ENCODE measurements at regions of chr2 and their contacts with region 1.

Region 1: GRCh38 chr2:46364797-46365457 is 67.7 kb downstream of the EPAS1 start:
- DNase-seq: no peak

Region 2: GRCh38 chr2:46010925-46011490 is 353.9 kb before region 1 on chr2:
- intact Hi-C with region 1: loop called (anchors 5 kb)
- DNase-seq: no peak

Region 3: GRCh38 chr2:46062637-46063412 is 302.1 kb before region 1 on chr2:
- intact Hi-C with region 1: loop called (anchors 1 kb)
- DNase-seq: peak in 9 of 10 donors; percentile 28 to 90 (median 72)

Region 4: DNA sequence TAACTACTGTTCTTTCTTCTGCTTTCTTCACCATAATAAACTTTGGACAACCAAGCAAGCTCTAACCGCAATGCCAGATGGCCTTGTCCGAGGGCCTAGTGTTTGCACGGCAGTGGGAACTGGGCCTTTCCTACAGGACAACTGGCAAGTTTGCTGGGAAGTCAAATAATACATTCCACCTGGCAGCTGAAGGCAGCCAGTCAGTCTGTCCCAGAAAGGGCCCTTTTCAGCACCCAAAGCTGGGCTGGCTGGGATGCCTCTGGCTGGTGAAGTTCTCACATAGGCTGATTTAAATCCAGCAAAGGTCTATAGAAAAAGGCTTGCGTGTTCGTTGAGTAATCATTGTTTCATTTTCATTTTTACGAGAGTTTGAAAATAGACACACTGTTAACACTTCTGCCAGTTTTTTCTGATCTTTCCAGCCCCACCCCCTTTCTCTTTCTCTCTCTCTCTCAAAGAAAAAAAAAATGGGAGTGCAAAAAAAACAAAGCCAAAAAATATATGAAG is 177.8 kb before region 1 on chr2:
- intact Hi-C with region 1: loop called (anchors 10 kb)
- DNase-seq: no peak

Region 5: DNA sequence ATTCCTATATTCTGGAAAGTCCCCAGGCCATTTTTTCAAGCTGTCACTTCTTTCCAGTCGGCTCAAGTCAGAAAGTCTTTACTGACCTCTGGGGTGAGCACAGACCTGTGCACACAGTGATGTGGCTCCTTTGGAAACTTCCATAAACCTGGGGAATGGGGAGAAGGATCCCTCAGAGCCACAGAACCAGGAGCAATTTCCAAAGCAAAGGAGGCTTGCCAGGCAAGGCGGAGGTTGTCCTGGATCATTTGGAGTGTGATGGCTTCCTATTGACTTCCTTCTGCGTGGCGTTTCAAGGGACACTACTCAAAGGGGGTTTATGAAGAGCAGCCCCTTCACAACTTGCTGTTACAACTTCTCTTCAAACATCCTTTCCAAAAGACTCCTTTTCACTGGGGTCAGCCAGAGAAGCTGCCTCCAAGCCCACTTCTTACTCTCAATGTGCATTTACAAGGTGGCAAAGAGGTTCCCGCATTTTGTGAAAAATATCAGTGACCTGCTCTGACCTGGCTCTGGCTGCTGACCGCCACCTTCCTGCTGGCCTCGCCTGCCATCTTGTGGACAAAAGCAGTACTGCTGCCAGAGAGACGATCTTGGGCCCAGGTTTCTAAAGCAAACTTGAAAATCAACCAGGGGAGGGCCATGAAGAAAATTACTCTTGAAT is 96.2 kb after region 1 on chr2:
- intact Hi-C with region 1: loop called (anchors 1 kb)
- DNase-seq: peak; percentile 58 to 96 (median 84)

Measured in posterior cingulate gyrus (tissue), 11 donors.